ENCODE measurements at regions of chr10 and their contacts with region 1.

Region 1: GRCh38 chr10:59891349-59892335 is 14.7 kb downstream of the CCDC6 start:
- DNase-seq: no peak
- ATAC-seq: peak; percentile 43
- H3K4me3 ChIP-seq: peak overlapping the region in 2 of 5 experiments; percentile 3 to 52
- H3K4me3 Mint-ChIP-seq: peak overlapping the region; percentile 62
- H3K27ac ChIP-seq: peak overlapping the region; percentile 5 to 44
- H3K27ac Mint-ChIP-seq: peak overlapping the region; percentile 89
- H3K4me1 ChIP-seq: peaks cover 48 to 72% of the 10 kb centered on the region in 2 donors
- H3K4me1 Mint-ChIP-seq: peaks cover 89% of the 10 kb centered on the region
- H3K27me3 ChIP-seq: no peaks in the 10 kb centered on the region
- H3K27me3 Mint-ChIP-seq: no peaks in the 10 kb centered on the region
- CTCF ChIP-seq: no peak

Region 2: GRCh38 chr10:59688921-59689351 is 202.7 kb before region 1 on chr10:
- CTCF ChIA-PET with region 1: no interaction called
- POLR2A ChIA-PET with region 1: no interaction called
- intact Hi-C with region 1: no loop called
- DNase-seq: peak; percentile 27
- ATAC-seq: peak; percentile 41
- H3K4me3 ChIP-seq: no peak overlapping the region
- H3K4me3 Mint-ChIP-seq: no peak overlapping the region
- H3K27ac ChIP-seq: no peak overlapping the region
- H3K27ac Mint-ChIP-seq: no peak overlapping the region
- H3K4me1 ChIP-seq: peaks cover 6% of the 10 kb centered on the region in 2 donors
- H3K4me1 Mint-ChIP-seq: peaks cover 8% of the 10 kb centered on the region
- H3K27me3 ChIP-seq: no peaks in the 10 kb centered on the region
- H3K27me3 Mint-ChIP-seq: no peaks in the 10 kb centered on the region
- CTCF ChIP-seq: no peak

Region 3: GRCh38 chr10:59847326-59847725 is 44.3 kb before region 1 on chr10:
- CTCF ChIA-PET with region 1: no interaction called
- POLR2A ChIA-PET with region 1: no interaction called
- intact Hi-C with region 1: no loop called
- DNase-seq: no peak
- ATAC-seq: no peak
- H3K4me3 ChIP-seq: no peak overlapping the region
- H3K4me3 Mint-ChIP-seq: no peak overlapping the region
- H3K27ac ChIP-seq: no peak overlapping the region
- H3K27ac Mint-ChIP-seq: no peak overlapping the region
- H3K4me1 ChIP-seq: peaks cover 9 to 12% of the 10 kb centered on the region in 2 donors
- H3K4me1 Mint-ChIP-seq: peaks cover 29% of the 10 kb centered on the region
- H3K27me3 ChIP-seq: no peaks in the 10 kb centered on the region
- H3K27me3 Mint-ChIP-seq: no peaks in the 10 kb centered on the region
- CTCF ChIP-seq: no peak

Region 4: DNA sequence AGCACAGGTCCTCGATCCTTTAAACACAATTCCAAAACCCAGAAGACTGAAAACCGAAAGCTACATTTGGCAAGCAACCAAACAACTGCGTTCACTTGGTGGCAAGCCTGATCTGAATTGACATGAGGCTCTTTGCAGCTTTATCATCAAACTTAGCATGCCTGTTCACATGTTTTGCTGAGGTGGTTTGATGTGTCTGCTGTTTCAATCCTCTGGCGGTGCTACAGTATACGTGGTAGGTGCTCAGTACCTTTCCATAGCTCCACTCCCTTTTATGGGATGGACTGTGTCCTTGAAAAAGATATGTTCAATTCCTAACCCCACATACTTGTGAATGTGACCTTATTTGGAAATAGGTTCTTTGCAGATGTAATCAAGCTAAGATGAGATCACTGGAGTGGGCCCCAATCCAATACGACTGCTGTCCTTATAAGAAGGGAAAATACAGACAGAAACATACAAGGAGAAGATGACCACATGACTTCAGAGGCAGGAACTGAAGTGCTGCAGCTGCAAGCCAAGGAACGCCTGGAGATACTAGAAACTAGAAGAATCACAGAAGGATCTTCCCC is 18.7 kb before region 1 on chr10:
- CTCF ChIA-PET with region 1: interaction called, 4 read pairs
- POLR2A ChIA-PET with region 1: interaction called, 3 read pairs
- intact Hi-C with region 1: loop called (anchors 2 kb)
- DNase-seq: no peak
- ATAC-seq: no peak
- H3K4me3 ChIP-seq: no peak overlapping the region
- H3K4me3 Mint-ChIP-seq: peak overlapping the region; percentile 33
- H3K27ac ChIP-seq: peak overlapping the region; percentile 11 to 64
- H3K27ac Mint-ChIP-seq: peak overlapping the region; percentile 16
- H3K4me1 ChIP-seq: peaks cover 52 to 56% of the 10 kb centered on the region in 2 donors
- H3K4me1 Mint-ChIP-seq: peaks cover 89% of the 10 kb centered on the region
- H3K27me3 ChIP-seq: no peaks in the 10 kb centered on the region
- H3K27me3 Mint-ChIP-seq: no peaks in the 10 kb centered on the region
- CTCF ChIP-seq: no peak